Aorta (tissue), 5 donors: ENCODE measurements at regions of chr5 and their contacts with region 1.

Region 1: GRCh38 chr5:139711067-139711905 is 63.1 kb downstream of the CXXC5 start:
- DNase-seq: peak in 1 of 2 donors; percentile 90
- ATAC-seq: peak; percentile 53
- H3K4me3 ChIP-seq: peak overlapping the region; percentile 2 to 60
- H3K27ac ChIP-seq: peak overlapping the region in 1 of 2 donors; percentile 2
- H3K4me1 ChIP-seq: no peaks in the 10 kb centered on the region
- H3K27me3 ChIP-seq: no peaks in the 10 kb centered on the region

Region 2: GRCh38 chr5:139745800-139746690 is 34.8 kb after region 1 on chr5:
- intact Hi-C with region 1: loop called (anchors 2 to 5 kb)
- DNase-seq: peak; percentile 79 to 87
- ATAC-seq: peak; percentile 77
- H3K4me3 ChIP-seq: peak overlapping the region; percentile 18 to 22
- H3K27ac ChIP-seq: peak overlapping the region in 1 of 2 donors; percentile 4
- H3K4me1 ChIP-seq: no peaks in the 10 kb centered on the region
- H3K27me3 ChIP-seq: no peaks in the 10 kb centered on the region

Region 3: GRCh38 chr5:140169410-140169809 is 458.1 kb after region 1 on chr5:
- intact Hi-C with region 1: no loop called
- DNase-seq: peak in 1 of 2 donors; percentile 25
- ATAC-seq: no peak
- H3K4me3 ChIP-seq: no peak overlapping the region
- H3K27ac ChIP-seq: no peak overlapping the region
- H3K4me1 ChIP-seq: peaks cover 2 to 7% of the 10 kb centered on the region in 2 donors
- H3K27me3 ChIP-seq: no peaks in the 10 kb centered on the region